ENCODE measurements at regions of chr4 and their contacts with region 1.

Region 1: DNA sequence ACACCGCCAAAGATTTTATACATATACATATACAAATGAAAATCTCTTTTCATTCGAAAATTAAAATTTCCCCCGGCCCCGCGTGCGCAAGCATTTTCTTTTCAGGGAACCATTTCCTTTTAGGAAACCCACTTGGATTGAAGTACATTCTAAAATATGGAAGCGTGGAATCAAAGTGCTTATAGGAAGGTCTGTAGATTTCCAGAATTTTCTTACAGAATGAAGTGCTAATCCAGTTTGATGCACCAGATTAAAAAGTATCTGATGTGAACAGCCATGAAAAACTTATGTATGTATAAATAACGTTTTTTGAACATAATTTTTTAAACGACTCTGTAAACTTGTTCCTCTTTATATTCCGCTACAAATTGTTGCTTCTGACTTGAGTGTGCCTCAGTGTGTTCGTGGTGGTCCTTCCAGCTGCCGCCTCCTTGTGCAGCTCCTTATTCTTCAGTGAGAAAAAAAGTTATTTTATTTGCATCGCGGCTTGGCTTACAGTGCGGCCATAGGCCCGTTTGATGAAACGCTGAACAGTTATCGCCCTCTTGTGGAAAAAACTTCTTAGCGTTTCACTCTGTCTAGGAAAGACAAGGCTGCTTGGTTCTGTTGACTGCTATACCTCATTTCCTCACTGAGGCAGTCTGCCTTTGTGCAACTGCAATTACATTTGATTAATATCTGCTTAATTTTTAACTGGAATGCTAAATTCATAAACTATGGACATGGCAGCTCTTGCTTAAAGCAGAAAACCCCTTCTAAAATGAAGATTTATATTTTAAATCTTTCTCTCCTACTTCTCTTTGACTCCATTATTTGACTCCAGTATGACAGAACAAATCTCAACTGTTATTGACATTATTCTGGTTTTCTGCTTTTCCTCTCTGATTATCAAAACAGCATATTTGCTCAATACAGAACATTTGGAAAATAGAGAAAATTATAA is 4.7 kb upstream of the NKX6-1 start:
- DNase-seq: peak; percentile 52
- H3K4me3 ChIP-seq: no peak overlapping the region
- H3K27ac ChIP-seq: no peak overlapping the region
- H3K4me1 ChIP-seq: peaks cover 9% of the 10 kb centered on the region
- H3K27me3 ChIP-seq: peaks cover 44% of the 10 kb centered on the region
- CTCF ChIP-seq: peak; percentile 75 to 82

Region 2: DNA sequence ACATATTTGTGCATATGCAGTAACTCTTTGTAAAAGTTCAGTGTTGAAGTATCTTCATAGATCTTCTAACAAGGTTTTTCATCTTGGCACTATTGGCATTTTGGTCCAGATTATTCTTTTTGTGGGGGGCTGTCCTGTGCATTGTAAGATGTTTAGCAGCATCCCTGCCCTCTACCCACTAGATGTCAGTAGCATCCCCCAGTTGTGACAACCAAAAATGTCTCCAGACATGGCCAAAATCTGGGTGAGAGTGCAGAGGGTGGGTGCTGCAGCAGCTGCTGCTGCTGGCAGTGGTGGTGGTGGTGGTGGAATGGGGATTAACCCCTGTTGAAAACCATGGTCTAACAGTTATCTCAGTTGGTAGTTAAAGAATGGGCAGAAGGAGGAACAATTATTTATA is 597.8 kb before region 1 on chr4:
- CTCF ChIA-PET with region 1: no interaction called
- dilution Hi-C with region 1: no loop called
- in situ Hi-C with region 1: no loop called
- intact Hi-C with region 1: loop called (anchors 5 kb)
- DNase-seq: no peak
- H3K4me3 ChIP-seq: no peak overlapping the region
- H3K27ac ChIP-seq: no peak overlapping the region
- H3K4me1 ChIP-seq: no peaks in the 10 kb centered on the region
- H3K27me3 ChIP-seq: peaks cover 13% of the 10 kb centered on the region
- CTCF ChIP-seq: peak in 1 of 2 donors; percentile 28

Region 3: DNA sequence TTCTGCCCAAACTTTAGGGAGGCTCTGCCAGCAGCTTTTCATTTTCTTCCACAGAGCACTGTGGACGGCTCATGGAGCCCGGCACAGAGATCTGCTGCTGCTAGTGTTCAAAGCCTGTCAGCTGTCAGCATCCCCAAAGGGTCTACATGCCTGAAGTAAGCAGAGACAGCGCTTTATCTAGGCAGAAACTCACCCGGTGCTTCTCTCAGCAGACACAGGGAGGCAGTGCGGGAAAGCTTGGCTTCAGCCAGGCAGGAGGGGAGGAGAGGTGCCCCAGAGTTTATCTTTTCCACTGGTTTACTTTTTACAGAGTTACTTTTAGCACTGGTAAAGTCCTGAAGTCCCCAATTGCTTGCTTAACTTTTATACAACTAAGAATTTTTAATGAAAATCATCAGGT is 344.0 kb before region 1 on chr4:
- CTCF ChIA-PET with region 1: no interaction called
- dilution Hi-C with region 1: no loop called
- in situ Hi-C with region 1: no loop called
- intact Hi-C with region 1: loop called (anchors 10 kb)
- DNase-seq: no peak
- H3K4me3 ChIP-seq: no peak overlapping the region
- H3K27ac ChIP-seq: no peak overlapping the region
- H3K4me1 ChIP-seq: no peaks in the 10 kb centered on the region
- H3K27me3 ChIP-seq: peaks cover 10% of the 10 kb centered on the region
- CTCF ChIP-seq: peak; percentile 16 to 34

Region 4: GRCh38 chr4:84719115-84719514 is 215.3 kb after region 1 on chr4:
- CTCF ChIA-PET with region 1: no interaction called
- dilution Hi-C with region 1: no loop called
- in situ Hi-C with region 1: no loop called
- intact Hi-C with region 1: no loop called
- DNase-seq: no peak
- H3K4me3 ChIP-seq: no peak overlapping the region
- H3K27ac ChIP-seq: no peak overlapping the region
- H3K4me1 ChIP-seq: no peaks in the 10 kb centered on the region
- H3K27me3 ChIP-seq: no peaks in the 10 kb centered on the region
- CTCF ChIP-seq: no peak

Measured in mammary epithelial cell (primary cell).